ENCODE measurements at regions of chr11 and their contacts with region 1.

Region 1: DNA sequence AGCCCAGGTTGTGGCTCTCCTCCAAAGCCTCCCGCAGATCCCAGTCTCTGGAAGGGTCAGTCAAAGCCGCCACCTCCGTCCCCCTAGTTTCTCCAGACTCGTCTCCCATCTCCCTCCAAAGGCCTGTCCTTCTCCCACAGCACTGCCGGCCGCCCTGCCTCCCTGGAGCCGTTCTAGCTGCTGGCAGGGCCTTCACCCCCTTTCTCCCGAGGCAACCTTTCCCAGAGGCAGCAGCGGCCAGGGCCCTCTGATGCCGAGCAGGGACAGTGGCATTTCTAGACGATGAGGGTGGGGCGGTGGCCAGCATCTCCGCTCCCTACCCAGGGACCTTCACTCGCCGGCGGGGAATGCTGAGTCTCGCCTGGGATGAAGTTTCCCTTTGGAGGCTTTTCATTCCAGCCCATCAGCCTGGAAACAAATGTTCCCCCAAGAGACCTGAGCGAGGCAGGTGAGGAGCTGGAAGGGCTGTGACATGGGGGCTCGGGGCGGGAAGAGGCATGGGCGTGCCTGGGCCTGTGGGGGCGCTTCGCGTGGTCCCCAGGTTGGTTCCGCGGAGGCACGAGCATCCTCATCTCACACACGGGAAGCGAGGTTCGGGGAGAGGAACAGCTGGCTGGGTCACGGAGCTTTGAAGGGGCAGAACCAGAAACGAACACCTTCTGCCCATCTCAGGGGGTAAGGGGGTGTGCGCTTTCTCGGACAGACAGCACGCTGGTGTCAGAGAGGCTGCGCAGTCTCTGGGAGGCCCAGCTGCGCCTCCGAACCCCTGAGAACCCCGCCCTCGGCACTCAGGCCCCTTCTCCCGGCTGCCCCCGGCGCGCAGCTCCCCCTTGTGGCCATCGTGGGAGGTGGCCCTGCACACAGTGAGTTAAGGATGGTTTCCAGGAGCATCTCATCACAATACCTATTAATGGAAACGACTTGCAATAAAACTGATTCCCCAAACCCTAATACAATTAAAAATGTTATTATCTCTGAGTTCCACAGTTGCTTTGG is 18.1 kb upstream of the KLHL35 start:
- DNase-seq: peak in 1 of 2 experiments; percentile 97
- H3K4me3 ChIP-seq: peak overlapping the region in 3 of 4 experiments; percentile 3 to 27 (median 5); a peak in 2 of 8 replicates
- H3K27ac ChIP-seq: no peak overlapping the region
- H3K4me1 ChIP-seq: peaks cover 0 to 6% (median 0%) of the 10 kb centered on the region in 4 experiments; a peak in 3 of 7 replicates
- H3K27me3 ChIP-seq: no peaks in the 10 kb centered on the region; a peak in 1 of 7 replicates
- CTCF ChIP-seq: peak; percentile 87 to 93 (median 93)
- EP300 ChIP-seq: no peak
- POLR2A ChIP-seq: no peak
- RAD21 ChIP-seq: peak; percentile 66 to 80

Region 2: DNA sequence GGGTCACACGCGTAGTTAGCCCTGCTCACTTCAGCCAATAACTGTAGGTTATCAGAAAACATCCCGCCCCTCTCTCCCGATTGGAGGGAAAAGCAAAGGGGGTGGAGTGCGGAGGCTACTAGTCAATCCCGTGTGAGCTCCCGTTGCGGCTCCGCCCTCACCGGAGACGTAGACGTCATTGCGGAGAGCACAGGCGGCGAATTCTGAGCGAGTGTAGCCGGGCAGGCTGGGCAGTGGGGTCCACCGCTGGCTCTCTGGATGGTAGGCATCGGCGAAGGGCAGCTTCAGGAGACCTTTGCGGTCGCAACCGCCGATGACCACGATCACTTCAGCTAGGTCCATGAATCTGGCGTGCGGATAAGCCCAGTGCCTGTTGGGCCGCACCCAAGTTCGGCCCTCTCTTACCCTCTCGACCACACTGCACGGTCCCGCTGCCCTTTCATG is 22.8 kb before region 1 on chr11:
- CTCF ChIA-PET with region 1: interaction called, 133 read pairs
- POLR2A ChIA-PET with region 1: interaction called, 7 read pairs
- DNase-seq: no peak
- H3K4me3 ChIP-seq: no peak overlapping the region
- H3K27ac ChIP-seq: no peak overlapping the region
- H3K4me1 ChIP-seq: peaks cover 0 to 23% (median 15%) of the 10 kb centered on the region in 4 experiments; a peak in 6 of 7 replicates
- H3K27me3 ChIP-seq: peaks cover 47 to 66% (median 60%) of the 10 kb centered on the region in 4 experiments
- CTCF ChIP-seq: no peak
- EP300 ChIP-seq: no peak
- POLR2A ChIP-seq: no peak
- RAD21 ChIP-seq: no peak

Region 3: DNA sequence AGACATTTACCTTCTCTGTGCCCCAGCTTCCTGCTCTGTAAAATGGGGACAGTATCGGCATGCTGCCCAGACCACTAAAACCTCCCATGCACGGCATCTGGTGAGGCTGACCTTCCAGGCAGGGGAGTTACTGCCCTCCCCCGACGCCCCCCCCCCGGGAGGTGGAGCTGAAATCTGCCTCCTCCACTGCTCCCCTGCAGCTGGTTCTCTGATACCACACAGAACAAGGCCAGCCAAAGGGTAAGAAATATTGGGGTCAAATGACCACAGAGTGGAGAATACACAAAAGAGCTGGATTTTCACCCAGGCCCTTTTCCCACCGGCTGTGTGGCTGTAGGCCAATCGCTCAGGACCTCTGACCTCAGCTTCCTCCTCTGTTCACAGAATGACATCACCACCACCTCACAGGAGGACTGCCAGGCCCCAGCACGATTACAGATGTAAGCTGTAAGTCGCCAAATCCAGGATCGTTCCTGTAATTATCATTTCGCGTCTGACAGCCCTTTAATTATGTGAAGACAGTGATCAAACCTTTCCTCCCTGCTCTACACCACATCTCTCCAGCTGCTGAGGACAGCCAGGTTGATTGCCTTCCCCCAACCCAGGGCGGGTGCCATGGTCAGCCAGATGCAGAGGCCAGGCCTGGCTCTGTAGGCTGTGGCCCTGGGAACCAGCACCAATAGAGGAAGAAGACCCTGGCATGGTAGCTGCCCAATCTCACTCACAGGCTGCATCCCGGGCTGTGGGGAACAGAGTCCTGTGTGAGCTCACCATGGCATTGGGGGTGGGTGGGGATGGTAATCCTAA is 17.6 kb after region 1 on chr11:
- CTCF ChIA-PET with region 1: interaction called, 155 read pairs
- POLR2A ChIA-PET with region 1: interaction called, 13 read pairs
- DNase-seq: no peak
- H3K4me3 ChIP-seq: no peak overlapping the region
- H3K27ac ChIP-seq: no peak overlapping the region
- H3K4me1 ChIP-seq: peaks cover 0 to 7% (median 3%) of the 10 kb centered on the region in 4 experiments; a peak in 5 of 7 replicates
- H3K27me3 ChIP-seq: no peaks in the 10 kb centered on the region
- CTCF ChIP-seq: no peak
- EP300 ChIP-seq: no peak
- POLR2A ChIP-seq: no peak
- RAD21 ChIP-seq: no peak

Region 4: DNA sequence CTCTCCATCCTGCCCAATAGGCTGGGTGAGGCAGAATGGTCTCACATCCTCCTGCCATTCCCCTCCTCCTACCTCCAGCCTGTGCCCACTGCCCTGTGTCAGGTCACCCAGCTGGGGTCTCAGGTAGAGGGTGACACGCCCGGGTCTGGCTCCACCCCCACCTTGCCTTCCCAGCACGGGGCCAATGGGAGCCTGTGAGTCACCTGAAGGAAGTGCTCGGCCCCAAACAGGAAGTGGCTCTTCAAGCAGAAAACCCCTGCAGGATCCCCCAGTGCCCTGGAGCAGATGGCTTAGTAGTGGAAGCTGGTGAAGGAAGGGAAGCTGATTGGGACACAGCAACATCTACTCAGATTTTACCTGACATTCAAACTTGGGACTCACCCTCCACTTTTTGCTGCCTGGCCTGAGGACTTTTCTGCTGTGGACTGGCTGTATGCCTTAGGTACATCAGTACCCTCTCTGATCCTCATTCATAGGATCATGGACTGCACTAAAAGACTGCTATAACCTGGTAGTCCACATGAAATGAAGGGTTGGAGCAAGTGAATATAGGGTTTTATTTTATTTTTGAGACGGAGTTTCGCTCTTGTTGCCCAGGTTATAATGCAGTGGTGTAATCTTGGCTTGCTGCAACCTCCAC is 41.2 kb after region 1 on chr11:
- CTCF ChIA-PET with region 1: interaction called, 25 read pairs
- POLR2A ChIA-PET with region 1: no interaction called
- DNase-seq: peak in 1 of 2 experiments; percentile 21
- H3K4me3 ChIP-seq: no peak overlapping the region
- H3K27ac ChIP-seq: no peak overlapping the region
- H3K4me1 ChIP-seq: peaks cover 2 to 19% (median 13%) of the 10 kb centered on the region in 4 experiments
- H3K27me3 ChIP-seq: no peaks in the 10 kb centered on the region
- CTCF ChIP-seq: no peak
- EP300 ChIP-seq: no peak
- POLR2A ChIP-seq: no peak
- RAD21 ChIP-seq: no peak

Region 5: DNA sequence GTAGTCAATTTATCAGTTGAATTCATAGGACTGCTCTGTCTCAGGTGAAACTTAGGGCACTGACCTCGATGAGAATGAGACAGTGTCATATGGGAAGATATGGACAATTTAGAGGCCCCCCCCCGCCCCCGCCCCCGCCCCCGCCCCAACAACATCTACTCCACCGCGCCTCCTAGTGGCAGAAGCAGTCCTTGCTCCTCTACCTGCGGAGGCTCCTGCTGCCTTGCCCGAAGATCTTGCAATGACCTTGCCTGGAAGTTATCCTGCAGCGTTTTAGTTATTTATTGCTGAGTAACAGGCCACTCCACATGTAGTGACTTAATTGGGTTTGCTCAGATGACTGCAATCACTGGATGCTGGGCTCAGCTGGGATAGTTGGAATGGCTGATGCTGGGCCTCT is 126.1 kb after region 1 on chr11:
- CTCF ChIA-PET with region 1: interaction called, 14 read pairs
- POLR2A ChIA-PET with region 1: interaction called, 6 read pairs
- DNase-seq: peak in 1 of 2 experiments; percentile 88
- H3K4me3 ChIP-seq: no peak overlapping the region
- H3K27ac ChIP-seq: no peak overlapping the region
- H3K4me1 ChIP-seq: peaks cover 0 to 5% (median 2%) of the 10 kb centered on the region in 4 experiments; a peak in 4 of 7 replicates
- H3K27me3 ChIP-seq: no peaks in the 10 kb centered on the region
- CTCF ChIP-seq: peak; percentile 61 to 80 (median 61)
- EP300 ChIP-seq: no peak
- POLR2A ChIP-seq: no peak
- RAD21 ChIP-seq: peak in 1 of 2 experiments; percentile 40; a peak in 1 of 4 replicates

Region 6: DNA sequence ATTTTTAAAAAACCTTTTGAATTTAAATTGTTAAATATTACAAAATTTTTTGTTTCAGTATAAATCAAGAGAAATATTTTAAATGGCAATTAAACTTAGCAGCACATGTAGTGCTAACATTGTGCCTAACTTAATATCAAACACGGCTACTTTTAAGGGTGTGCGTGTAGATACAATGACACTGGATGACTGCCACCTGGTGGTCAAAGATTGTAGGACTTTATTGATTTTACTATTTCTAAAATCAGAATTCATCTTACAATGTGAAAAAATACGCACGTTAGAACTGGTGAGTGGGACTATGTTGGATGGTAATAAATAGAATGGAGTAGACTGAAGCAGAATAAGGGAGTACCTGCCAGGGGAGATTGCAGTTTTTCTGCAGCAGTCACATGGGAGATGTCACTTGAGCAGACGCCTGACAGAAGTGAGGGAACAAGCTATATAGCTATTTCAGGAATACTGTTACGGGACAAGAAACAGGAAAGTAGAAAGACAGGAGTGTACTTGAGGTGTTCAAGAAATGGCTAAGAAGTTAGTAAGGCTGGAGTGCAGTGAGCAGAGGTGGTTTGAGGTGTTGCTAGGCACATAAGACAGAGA is 416.8 kb after region 1 on chr11:
- CTCF ChIA-PET with region 1: no interaction called
- POLR2A ChIA-PET with region 1: no interaction called
- DNase-seq: no peak
- H3K4me3 ChIP-seq: no peak overlapping the region
- H3K27ac ChIP-seq: no peak overlapping the region
- H3K4me1 ChIP-seq: no peaks in the 10 kb centered on the region; a peak in 1 of 7 replicates
- H3K27me3 ChIP-seq: no peaks in the 10 kb centered on the region
- CTCF ChIP-seq: peak in 2 of 3 experiments; percentile 50 to 64; a peak in 2 of 4 replicates
- EP300 ChIP-seq: no peak
- POLR2A ChIP-seq: no peak
- RAD21 ChIP-seq: peak; percentile 68 to 69

Measured in H1 (cell line).